ENCODE measurements at regions of chr7 and their contacts with region 1.

Region 1: GRCh38 chr7:98014352-98014751 is 24.4 kb upstream of the OCM2 start:
- DNase-seq: no peak
- H3K4me3 ChIP-seq: no peak overlapping the region
- H3K27ac ChIP-seq: no peak overlapping the region
- H3K4me1 ChIP-seq: no peaks in the 10 kb centered on the region
- H3K27me3 ChIP-seq: peaks cover 3% of the 10 kb centered on the region
- CTCF ChIP-seq: no peak
- POLR2A ChIP-seq: no peak

Region 2: DNA sequence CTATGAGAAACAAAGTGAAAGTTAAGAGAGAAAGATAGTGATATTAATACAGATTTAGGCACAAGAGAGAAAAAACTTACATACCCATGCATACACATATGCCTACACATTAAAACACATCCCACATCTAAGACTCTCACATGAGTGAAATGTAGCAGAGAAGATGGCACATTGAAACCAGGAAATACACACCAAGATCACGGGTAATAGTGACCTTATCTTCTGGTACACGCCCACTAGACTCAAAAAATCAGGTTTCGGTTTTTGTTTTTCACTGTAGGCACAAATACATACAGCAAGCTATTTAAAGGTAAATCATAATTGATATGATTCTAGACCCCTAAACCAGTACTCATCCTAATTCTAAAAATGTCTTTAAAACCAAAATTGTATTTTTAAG is 507.6 kb before region 1 on chr7:
- intact Hi-C with region 1: loop called in 1 of 2 experiments (anchors 10 kb)
- DNase-seq: no peak
- H3K4me3 ChIP-seq: no peak overlapping the region
- H3K27ac ChIP-seq: no peak overlapping the region
- H3K4me1 ChIP-seq: peaks cover 0 to under 1% of the 10 kb centered on the region in 2 donors
- H3K27me3 ChIP-seq: no peaks in the 10 kb centered on the region
- CTCF ChIP-seq: no peak
- POLR2A ChIP-seq: no peak